ENCODE measurements at regions of chr3 and their contacts with region 1.

Region 1: DNA sequence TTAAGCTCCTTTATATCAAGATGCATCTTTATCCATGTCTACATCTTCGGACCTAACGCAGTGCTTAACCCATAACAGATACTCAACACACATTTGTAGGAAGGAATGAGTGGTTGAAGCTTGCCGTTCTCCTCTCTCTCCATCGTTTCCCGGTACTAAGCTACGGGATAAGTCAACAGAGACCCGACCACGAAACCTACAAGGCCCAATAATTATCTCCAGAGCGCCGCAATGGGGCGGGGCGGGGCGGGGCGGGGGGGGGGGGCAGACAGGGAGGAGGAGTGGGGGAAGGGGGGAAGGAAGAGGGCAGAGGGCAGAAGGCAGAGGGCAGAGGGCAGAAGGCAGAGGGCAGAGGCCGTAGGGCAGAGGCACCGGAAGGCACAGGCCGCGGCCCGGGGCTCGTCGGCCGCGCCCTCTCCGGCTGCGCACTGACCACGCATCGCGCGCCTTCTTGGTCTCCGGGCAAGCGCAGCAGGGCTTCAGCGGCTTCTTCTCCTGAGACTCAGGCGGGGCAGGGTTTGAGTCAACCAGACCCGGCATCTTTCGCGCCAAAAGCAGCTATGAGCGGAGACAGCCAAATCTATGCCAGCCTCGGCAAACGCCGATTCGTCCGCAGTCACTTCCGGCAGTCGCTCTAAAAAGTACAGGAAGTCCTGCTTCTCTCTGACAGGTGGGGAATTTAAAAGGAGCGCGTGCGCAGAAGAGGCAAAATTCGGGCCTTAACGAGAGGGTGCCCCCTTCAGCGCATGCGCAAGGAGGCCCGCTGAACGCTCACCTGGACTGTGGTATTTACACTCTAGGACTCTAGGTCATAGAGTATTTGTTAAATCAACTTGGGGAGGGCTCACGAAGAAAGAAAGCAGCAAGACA is at the start of gene COX17:
- DNase-seq: peak; percentile 96
- H3K4me3 ChIP-seq: peak within 1 kb of the TSS; percentile 74 to 81 (median 78)
- H3K27ac ChIP-seq: peak within 1 kb of the TSS; percentile 75
- H3K4me1 ChIP-seq: peaks cover 14% of the 10 kb centered on the region
- H3K27me3 ChIP-seq: no peaks in the 10 kb centered on the region
- CTCF ChIP-seq: no peak
- total RNA-seq, gene COX17: 11.3 to 41.1 TPM

Region 2: DNA sequence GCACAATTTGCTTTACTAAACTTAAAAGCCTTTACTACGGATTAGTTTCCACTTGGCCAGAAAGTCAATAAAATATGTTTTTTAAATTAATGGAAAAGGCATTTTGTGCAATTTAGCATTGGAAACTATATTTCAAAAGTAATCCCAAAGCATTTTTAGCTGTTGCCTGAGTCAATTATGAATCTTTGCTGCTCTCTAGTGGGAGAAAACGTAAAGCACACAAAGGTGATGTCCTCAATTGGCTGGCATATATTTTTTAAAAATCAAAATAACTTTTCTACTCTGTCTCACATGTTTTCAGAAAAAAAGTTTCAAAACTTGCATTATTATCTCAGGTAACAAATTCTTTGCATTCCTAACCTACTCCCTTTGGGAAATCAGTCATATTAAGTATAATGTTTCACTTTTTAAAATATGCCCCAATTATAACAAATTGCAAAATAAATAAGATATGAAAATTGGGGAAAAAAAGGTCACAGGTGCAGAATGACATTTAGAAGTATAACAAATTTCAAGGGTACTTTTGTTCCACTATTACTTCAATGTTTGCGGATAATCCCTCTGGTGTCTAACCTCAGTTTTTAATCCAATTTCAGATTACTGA is 578.3 kb before region 1 on chr3:
- CTCF ChIA-PET with region 1: no interaction called
- dilution Hi-C with region 1: no loop called
- in situ Hi-C with region 1: no loop called
- intact Hi-C with region 1: loop called (anchors 2 kb)
- DNase-seq: peak; percentile 23
- H3K4me3 ChIP-seq: no peak overlapping the region
- H3K27ac ChIP-seq: no peak overlapping the region
- H3K4me1 ChIP-seq: no peaks in the 10 kb centered on the region
- H3K27me3 ChIP-seq: no peaks in the 10 kb centered on the region
- CTCF ChIP-seq: peak; percentile 72 to 78

Region 3: DNA sequence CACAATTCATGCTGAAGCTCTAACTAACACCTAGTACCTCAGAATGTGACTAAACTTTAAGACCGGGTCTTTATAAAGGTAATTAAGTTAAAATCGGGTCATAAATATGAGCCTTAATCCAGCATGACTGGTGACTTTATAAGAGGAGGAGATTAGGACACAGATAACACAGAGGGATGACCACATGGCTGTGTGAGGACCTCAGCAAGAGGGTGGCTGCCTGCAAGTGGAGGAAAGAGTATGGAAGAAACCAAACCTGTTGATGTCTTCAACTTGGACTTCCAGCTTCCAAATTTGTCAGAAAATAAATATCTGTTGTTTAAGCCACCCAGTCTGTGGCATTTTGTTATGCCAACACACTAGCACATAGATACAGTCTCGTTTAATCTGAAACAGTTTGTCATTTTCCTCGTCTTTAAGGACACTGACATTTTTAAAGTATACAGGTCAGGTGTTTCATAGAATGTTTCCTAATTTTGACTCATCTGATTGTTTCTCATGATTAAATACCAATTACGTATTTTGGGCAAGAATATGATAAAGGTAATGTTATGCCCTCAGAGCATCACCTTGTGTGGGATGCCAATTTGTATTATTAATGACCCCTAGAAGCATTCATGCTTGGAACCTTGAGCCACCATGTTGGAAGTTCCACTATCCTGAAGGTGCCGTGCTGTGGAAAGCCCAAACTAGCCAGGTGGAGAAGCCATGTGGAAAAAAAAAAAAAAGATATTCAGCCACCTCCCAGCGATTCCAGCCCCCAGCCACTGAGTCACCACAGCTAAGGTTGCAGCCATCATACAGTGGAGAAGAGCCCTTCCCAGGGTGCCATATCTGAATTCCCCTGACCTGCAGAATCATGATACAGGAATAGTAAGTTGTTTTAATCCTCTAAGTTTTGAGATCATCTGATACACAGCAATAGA is 417.3 kb before region 1 on chr3:
- CTCF ChIA-PET with region 1: no interaction called
- dilution Hi-C with region 1: no loop called
- in situ Hi-C with region 1: loop called in 1 of 2 experiments (anchors 10 kb)
- intact Hi-C with region 1: no loop called
- DNase-seq: no peak
- H3K4me3 ChIP-seq: no peak overlapping the region
- H3K27ac ChIP-seq: no peak overlapping the region
- H3K4me1 ChIP-seq: no peaks in the 10 kb centered on the region
- H3K27me3 ChIP-seq: no peaks in the 10 kb centered on the region
- CTCF ChIP-seq: no peak

Region 4: GRCh38 chr3:119463171-119464169 is 213.5 kb before region 1 on chr3 and contains the start of gene TMEM39A:
- CTCF ChIA-PET with region 1: no interaction called
- dilution Hi-C with region 1: no loop called
- in situ Hi-C with region 1: no loop called
- intact Hi-C with region 1: loop called (anchors 1 kb)
- DNase-seq: peak; percentile 95
- H3K4me3 ChIP-seq: peak within 1 kb of the TSS; percentile 61 to 90 (median 83)
- H3K27ac ChIP-seq: peak within 1 kb of the TSS; percentile 84
- H3K4me1 ChIP-seq: peaks cover 20% of the 10 kb centered on the region
- H3K27me3 ChIP-seq: no peaks in the 10 kb centered on the region
- CTCF ChIP-seq: peak in 1 of 2 donors; percentile 7
- total RNA-seq, gene TMEM39A: 47.7 to 47.8 TPM

Region 5: DNA sequence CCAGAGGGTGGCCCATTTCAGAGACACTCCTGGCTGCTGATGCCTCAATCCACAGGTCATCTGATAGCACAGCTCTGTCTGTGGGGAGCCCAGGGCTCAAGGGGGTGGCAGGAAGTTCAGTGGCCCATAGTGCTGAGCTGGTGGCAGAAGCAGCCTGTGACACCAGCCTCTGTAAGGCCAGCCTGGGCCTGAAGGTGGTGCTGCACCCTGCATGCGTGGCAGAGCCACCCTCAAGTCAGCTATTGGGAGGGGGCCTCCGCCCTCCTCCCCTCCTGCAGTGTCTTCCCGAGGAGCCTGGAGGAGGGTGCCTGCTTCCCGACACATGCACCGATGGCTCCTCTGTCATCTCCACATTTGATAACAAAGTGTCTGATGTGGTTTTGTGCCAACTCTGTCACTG is 76.3 kb before region 1 on chr3:
- CTCF ChIA-PET with region 1: no interaction called
- dilution Hi-C with region 1: no loop called
- in situ Hi-C with region 1: no loop called
- intact Hi-C with region 1: loop called (anchors 5 kb)
- DNase-seq: no peak
- H3K4me3 ChIP-seq: no peak overlapping the region
- H3K27ac ChIP-seq: no peak overlapping the region
- H3K4me1 ChIP-seq: no peaks in the 10 kb centered on the region
- H3K27me3 ChIP-seq: no peaks in the 10 kb centered on the region
- CTCF ChIP-seq: peak in 1 of 2 donors; percentile 52

Region 6: DNA sequence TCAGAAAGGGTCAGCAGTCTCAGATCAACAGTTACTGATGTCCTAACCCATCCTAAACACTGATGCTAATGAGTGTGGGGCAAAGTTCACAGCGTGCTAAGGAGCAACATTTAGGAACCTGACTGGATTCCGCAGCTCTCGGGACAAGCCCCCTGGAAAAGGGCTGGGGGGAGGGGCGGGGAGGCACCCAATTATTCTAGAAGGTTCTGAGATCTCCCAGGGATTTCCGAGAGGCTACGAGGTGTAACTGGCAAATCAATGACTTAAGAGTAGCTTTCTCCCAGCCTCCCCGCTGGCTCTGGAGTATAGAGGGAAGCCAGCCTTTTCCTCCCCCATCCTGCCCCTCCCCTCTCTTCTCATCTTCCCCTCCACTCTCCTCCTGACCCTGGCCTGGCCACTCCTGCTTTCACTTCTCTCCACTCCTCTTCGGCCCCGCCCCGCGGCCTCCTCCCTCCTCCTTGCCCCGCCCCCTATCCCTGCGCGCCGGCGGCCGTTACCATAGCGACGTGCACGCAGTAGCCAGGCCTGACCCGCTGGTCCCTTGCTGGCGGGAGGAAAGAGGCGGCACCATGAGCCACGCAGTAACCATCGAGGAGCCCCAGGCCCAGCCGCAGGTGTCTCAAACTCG is 25.6 kb after region 1 on chr3 and contains the start of gene CFAP91:
- CTCF ChIA-PET with region 1: no interaction called
- dilution Hi-C with region 1: no loop called
- in situ Hi-C with region 1: no loop called
- intact Hi-C with region 1: no loop called
- DNase-seq: peak; percentile 87
- H3K4me3 ChIP-seq: peak within 1 kb of the TSS; percentile 41 to 50 (median 48)
- H3K27ac ChIP-seq: peak within 1 kb of the TSS; percentile 7
- H3K4me1 ChIP-seq: peaks cover 10% of the 10 kb centered on the region
- H3K27me3 ChIP-seq: no peaks in the 10 kb centered on the region
- CTCF ChIP-seq: no peak
- total RNA-seq, gene CFAP91: 0.17 TPM in 1 of 2 donors, not detected in the other

Region 7: GRCh38 chr3:120182724-120183524 is 505.9 kb after region 1 on chr3:
- CTCF ChIA-PET with region 1: no interaction called
- dilution Hi-C with region 1: no loop called
- in situ Hi-C with region 1: no loop called
- intact Hi-C with region 1: loop called (anchors 5 kb)
- DNase-seq: peak; percentile 60
- H3K4me3 ChIP-seq: no peak overlapping the region
- H3K27ac ChIP-seq: no peak overlapping the region
- H3K4me1 ChIP-seq: peaks cover 31% of the 10 kb centered on the region
- H3K27me3 ChIP-seq: no peaks in the 10 kb centered on the region
- CTCF ChIP-seq: peak; percentile 50 to 55

Measured in mammary epithelial cell (primary cell).